Breast epithelium (tissue), 4 donors: ENCODE measurements at regions of chr4 and their contacts with region 1.

Region 1: DNA sequence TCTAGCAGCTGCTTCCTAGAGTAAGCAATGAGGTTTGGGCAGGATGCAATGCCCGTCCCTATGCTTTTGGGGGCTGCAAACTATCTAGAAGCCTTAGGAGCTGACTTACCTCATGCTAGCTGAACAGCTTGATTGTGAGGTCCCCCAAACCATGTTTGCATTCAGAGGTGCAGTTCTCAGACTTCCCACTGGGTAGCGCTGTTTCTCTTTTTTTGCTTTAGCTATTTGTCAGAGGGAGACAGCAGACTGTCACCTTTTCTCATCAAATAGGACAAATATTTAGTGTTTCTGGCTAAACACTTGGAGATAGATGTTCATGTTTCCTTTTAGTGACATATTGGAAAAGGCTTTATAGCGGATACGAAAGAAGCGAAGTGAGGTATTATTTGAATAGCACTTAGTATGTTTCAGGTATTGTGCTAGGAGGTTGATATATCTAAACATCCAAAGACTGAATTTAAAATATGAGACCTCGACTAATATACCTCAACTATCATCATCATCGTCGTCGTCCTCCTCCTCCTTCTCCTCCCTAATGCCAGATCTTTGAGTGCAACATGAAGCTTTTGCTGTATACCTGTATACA is 18.7 kb upstream of the TMEM192 start:
- DNase-seq: peak; percentile 40 to 59
- H3K4me3 ChIP-seq: no peak overlapping the region
- H3K27ac ChIP-seq: no peak overlapping the region
- H3K4me1 ChIP-seq: no peaks in the 10 kb centered on the region
- H3K27me3 ChIP-seq: no peaks in the 10 kb centered on the region
- CTCF ChIP-seq: peak; percentile 93 to 95 (median 93)
- POLR2A ChIP-seq: no peak

Region 2: GRCh38 chr4:165464813-165465381 is 333.6 kb after region 1 on chr4:
- intact Hi-C with region 1: loop called (anchors 5 kb)
- DNase-seq: no peak
- H3K4me3 ChIP-seq: no peak overlapping the region
- H3K27ac ChIP-seq: no peak overlapping the region
- H3K4me1 ChIP-seq: no peaks in the 10 kb centered on the region
- H3K27me3 ChIP-seq: no peaks in the 10 kb centered on the region
- CTCF ChIP-seq: peak; percentile 58 to 82 (median 81)
- POLR2A ChIP-seq: no peak

Region 3: DNA sequence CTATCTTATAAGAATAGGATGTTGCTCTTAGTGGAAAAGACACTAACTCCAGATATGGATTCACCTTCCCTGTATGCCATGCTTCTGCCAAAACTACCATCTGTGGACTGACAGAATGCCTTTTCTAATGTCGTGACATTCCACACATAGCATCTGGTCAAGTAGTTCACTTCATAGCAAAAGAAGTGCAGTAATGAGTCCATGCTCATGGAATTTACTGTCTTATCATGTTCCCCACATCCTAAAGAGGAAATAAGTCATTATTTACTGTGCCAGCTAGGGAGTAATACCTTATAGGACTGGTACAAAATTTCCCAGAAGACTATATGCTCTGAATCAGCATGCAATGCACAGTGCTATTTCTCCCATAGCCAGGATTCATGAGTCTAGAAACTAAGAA is 1304.1 kb after region 1 on chr4:
- intact Hi-C with region 1: no loop called
- DNase-seq: no peak
- H3K4me3 ChIP-seq: no peak overlapping the region
- H3K27ac ChIP-seq: no peak overlapping the region
- H3K4me1 ChIP-seq: no peaks in the 10 kb centered on the region
- H3K27me3 ChIP-seq: no peaks in the 10 kb centered on the region
- CTCF ChIP-seq: no peak
- POLR2A ChIP-seq: no peak